A549 (cell line): ENCODE measurements at regions of chr16 and their contacts with region 1.

Region 1: DNA sequence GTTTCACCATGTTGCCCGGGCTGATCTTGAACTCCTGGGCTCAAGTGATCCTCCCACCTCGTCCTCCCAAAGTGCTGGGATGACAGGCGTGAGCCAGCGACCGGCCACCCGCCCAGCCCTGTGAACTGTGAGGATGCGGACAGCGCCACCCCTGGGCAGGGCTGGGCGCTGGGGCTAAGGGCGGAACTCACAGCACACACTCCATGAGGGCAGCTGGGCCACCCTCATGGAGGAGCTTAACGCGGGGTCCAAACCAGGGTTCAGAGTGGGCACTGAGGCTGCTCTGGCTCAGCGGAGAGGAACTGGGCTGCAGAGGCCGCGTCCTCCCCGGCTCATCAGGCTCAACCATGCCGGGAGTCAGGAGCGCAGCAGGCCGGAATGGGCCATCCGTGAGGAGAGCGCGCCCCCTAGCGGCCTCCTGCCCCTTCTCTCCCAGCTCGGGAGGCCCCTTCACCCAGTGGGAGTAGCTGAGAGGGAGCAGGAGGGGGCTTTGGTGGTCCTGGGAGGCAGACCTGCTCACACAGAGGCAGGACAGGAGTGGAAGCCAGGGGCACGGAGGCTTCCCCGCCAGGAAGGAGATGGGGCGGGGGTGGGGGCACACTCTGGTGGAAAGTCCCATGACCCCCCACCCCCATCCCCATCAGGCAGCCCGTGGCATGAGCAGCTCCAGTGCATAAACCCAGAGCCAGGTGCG is 13.8 kb downstream of the CORO7 start:
- DNase-seq: peak; percentile 72 to 88
- ATAC-seq: peak; percentile 90 to 93
- H3K4me3 ChIP-seq: 0 out of 3 replicates have a peak overlapping the region, but pooled peaks have one; percentile 28
- H3K27ac ChIP-seq: peak overlapping the region; percentile 64 to 89
- H3K4me1 ChIP-seq: peaks cover 4% of the 10 kb centered on the region; the same call in 1 of the 3 replicates
- CTCF ChIP-seq: peak; percentile 99
- EP300 ChIP-seq: no peak
- POLR2A ChIP-seq: no peak
- RAD21 ChIP-seq: peak; percentile 93 to 99

Region 2: GRCh38 chr16:4200000-4200780 is 202.4 kb before region 1 on chr16:
- CTCF ChIA-PET with region 1: interaction called, 19 read pairs
- POLR2A ChIA-PET with region 1: no interaction called
- DNase-seq: peak; percentile 72 to 74
- ATAC-seq: peak; percentile 96
- H3K4me3 ChIP-seq: no peak overlapping the region
- H3K27ac ChIP-seq: peak overlapping the region in 1 of 2 experiments; percentile 65; a peak in 3 of 6 replicates
- H3K4me1 ChIP-seq: peaks cover 7% of the 10 kb centered on the region; the same call in 2 of the 3 replicates
- CTCF ChIP-seq: peak; percentile 66
- EP300 ChIP-seq: no peak
- POLR2A ChIP-seq: no peak
- RAD21 ChIP-seq: peak; percentile 86 to 89

Region 3: GRCh38 chr16:4288148-4288921 is 114.3 kb before region 1 on chr16:
- CTCF ChIA-PET with region 1: interaction called, 87 read pairs
- POLR2A ChIA-PET with region 1: interaction called, 13 read pairs
- DNase-seq: peak; percentile 74 to 86
- ATAC-seq: peak; percentile 83 to 85
- H3K4me3 ChIP-seq: no peak overlapping the region
- H3K27ac ChIP-seq: peak overlapping the region; percentile 50 to 86
- H3K4me1 ChIP-seq: peaks cover 60% of the 10 kb centered on the region
- CTCF ChIP-seq: peak; percentile 97
- EP300 ChIP-seq: no peak
- POLR2A ChIP-seq: no peak
- RAD21 ChIP-seq: peak; percentile 93 to 97

Region 4: GRCh38 chr16:4315186-4316109 is 87.1 kb before region 1 on chr16 and contains the start of gene GLIS2:
- CTCF ChIA-PET with region 1: interaction called, 82 read pairs
- POLR2A ChIA-PET with region 1: no interaction called
- DNase-seq: peak; percentile 78 to 89
- ATAC-seq: peak; percentile 36 to 37
- H3K4me3 ChIP-seq: peak within 1 kb of the TSS; percentile 87
- H3K27ac ChIP-seq: peak within 1 kb of the TSS; percentile 96
- H3K4me1 ChIP-seq: peaks cover 52% of the 10 kb centered on the region
- CTCF ChIP-seq: no peak
- EP300 ChIP-seq: peak in 1 of 2 experiments; percentile 51; a peak in 2 of 5 replicates
- POLR2A ChIP-seq: no peak; the same call in none of the 2 replicates
- RAD21 ChIP-seq: no peak; a peak in 1 of 5 replicates
- polyA plus RNA-seq, gene GLIS2: 5.5 and 6.8 TPM in 2 replicates

Region 5: GRCh38 chr16:4339909-4340308 is 62.7 kb before region 1 on chr16:
- CTCF ChIA-PET with region 1: interaction called, 231 read pairs
- POLR2A ChIA-PET with region 1: no interaction called
- DNase-seq: no peak
- ATAC-seq: peak in 1 of 2 experiments; percentile 11; a peak in 3 of 6 replicates
- H3K4me3 ChIP-seq: no peak overlapping the region
- H3K27ac ChIP-seq: no peak overlapping the region
- H3K4me1 ChIP-seq: peaks cover 19% of the 10 kb centered on the region; the same call in 2 of the 3 replicates
- CTCF ChIP-seq: no peak
- EP300 ChIP-seq: no peak
- POLR2A ChIP-seq: no peak
- RAD21 ChIP-seq: no peak

Region 6: DNA sequence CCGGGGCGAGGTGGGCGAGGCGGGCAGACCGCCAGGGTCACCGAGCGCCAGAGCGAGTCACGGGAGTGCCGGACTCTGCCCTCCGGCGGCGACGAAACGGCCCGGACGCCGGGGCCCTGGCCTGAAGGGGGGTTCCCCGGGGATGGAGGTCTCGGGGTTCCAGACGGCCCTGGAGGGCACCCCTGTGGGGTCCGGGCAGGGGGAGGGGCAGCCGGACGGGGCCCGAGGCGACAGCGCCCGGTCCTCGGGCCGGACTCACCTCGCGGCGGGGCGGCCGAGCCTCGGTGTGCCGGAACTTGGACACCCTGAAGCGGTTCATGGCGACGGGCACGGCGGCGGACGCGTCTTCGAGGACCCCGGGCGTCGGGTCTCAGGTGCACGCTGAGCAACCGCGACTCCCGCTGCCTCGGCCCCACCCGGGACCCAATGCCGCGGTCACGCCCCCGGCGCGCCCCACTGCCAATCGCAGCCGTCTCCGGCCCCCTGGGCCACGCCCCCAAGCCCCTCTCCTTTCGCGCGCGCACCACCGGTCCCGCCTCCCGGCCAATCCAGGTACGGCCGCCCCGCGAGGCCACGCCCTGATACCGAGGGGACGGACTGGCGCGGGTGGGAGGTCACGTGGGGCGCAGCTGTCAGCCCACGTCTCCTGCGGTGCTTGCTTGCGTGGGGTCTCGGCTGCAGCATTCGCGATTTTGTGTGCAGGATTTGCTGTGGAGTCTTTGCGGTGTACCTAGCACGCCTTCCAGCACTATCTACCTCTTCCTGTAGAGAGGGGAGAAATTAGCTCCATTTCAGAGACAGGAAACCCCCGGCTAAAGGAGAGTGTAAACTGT is 13.8 kb after region 1 on chr16 and contains the start of gene CORO7:
- CTCF ChIA-PET with region 1: interaction called, 638 read pairs
- POLR2A ChIA-PET with region 1: interaction called, 6 read pairs
- DNase-seq: peak; percentile 89 to 93
- ATAC-seq: peak; percentile 86 to 96
- H3K4me3 ChIP-seq: peak within 1 kb of the TSS; percentile 83
- H3K27ac ChIP-seq: peak within 1 kb of the TSS; percentile 73 to 91
- H3K4me1 ChIP-seq: peaks cover 8% of the 10 kb centered on the region
- CTCF ChIP-seq: no peak
- EP300 ChIP-seq: no peak
- POLR2A ChIP-seq: no peak
- RAD21 ChIP-seq: no peak
- polyA plus RNA-seq, gene CORO7: 5.7 and 6.0 TPM in 2 replicates